MCF 10A (cell line): ENCODE measurements at regions of chr17 and their contacts with region 1.

Region 1: DNA sequence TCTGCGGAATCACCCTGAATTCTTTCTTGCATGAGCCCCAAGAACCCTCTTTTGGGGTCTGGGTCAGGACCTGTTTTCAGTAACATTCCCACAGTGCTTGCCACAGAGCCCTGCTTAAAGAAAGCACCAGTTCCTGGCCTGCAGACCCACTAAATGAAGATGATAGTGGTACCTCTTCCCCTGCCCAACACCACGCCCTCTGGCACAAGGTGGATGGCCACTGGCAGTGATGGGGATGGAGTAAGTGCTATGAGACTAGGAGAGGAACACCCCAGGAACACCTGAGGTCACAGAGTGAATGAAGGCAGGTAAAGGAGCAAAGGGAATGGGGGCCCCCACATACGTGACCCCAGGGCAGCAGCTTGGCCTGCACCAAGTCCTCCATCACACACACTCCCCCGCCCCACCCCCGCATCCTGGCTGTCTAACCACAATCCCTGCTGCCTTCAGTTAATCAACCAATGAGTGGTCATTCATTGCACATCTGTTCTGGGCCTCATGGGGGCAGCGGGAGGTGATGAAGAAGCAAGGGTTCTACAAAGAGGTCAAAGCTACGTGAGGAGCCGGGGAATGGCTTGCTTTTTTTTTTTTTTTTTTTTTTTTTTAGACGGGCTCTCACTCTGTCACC is 3.9 kb upstream of the PPY start:
- DNase-seq: peak; percentile 11
- H3K4me3 Mint-ChIP-seq: no peak overlapping the region
- H3K27ac Mint-ChIP-seq: no peak overlapping the region
- H3K4me1 Mint-ChIP-seq: no peaks in the 10 kb centered on the region
- H3K27me3 Mint-ChIP-seq: peaks cover 12% of the 10 kb centered on the region
- CTCF ChIP-seq: no peak

Region 2: DNA sequence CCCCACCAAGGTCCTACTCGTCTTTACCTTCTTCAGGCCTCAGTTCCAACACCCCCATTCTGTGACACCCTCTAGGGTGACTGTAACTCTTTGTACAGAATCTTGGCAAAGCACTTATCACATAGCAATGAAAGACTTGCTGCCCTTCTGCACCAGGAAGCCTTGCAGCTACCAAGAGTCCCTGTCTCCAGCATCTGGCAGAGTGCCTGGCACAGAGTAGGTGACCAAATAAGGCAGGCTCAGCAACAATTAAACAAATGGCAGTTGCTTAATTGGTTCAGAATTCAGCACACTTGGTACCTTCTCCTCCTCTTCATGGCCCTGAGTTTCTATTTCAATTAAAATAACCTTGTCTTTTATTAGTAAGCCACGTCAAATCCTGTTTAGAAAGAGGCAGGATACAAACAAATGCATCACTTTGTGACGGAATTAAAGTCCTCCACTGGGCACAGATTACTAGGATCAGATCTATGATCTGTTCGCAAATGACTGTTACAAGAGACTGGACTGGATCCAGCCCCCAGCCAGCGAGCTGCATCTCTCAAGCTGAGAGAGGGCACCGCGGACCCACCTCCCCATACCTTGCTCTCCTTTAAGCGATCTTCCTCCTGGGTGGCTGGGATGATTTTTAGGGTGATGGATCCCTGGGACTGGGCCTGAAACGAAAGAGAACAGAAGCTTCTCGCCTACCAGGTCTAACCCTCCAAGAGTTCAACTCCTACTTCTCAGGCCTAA is 122.7 kb before region 1 on chr17:
- CTCF ChIA-PET with region 1: no interaction called
- POLR2A ChIA-PET with region 1: no interaction called
- intact Hi-C with region 1: no loop called
- DNase-seq: no peak
- H3K4me3 Mint-ChIP-seq: no peak overlapping the region
- H3K27ac Mint-ChIP-seq: no peak overlapping the region
- H3K4me1 Mint-ChIP-seq: no peaks in the 10 kb centered on the region
- H3K27me3 Mint-ChIP-seq: no peaks in the 10 kb centered on the region
- CTCF ChIP-seq: no peak

Region 3: DNA sequence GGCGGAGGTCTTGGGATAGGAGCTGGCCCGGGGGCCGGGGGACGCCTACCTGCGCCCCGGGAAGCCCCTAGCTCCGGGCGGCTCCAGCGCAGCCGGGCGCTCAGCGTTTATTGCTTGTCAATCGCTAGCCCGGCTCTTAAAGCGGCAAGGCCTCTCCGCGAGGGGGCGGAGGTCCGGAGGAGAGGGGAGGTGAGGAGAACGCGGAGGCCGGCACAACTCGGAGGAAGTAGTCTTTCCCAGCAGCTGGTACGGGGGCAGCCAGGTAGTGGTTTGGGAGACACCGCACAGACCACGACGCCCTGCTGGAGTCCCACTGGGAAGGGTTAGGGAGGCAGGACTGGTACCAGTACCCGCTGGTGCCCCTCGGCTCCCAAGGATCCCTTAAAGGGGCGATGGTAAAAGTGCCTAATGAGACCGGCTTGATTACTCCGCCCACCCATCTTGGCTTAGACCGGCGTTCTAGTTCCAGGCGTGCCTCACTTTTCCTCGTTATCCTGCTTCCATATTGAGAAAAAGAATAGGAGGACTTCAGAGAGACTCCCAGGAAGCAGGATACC is 38.7 kb before region 1 on chr17 and contains the start of gene MPP2:
- CTCF ChIA-PET with region 1: interaction called, 15 read pairs
- POLR2A ChIA-PET with region 1: no interaction called
- intact Hi-C with region 1: no loop called
- DNase-seq: peak; percentile 20
- H3K4me3 Mint-ChIP-seq: no peak within 1 kb of the TSS
- H3K27ac Mint-ChIP-seq: no peak within 1 kb of the TSS
- H3K4me1 Mint-ChIP-seq: no peaks in the 10 kb centered on the region
- H3K27me3 Mint-ChIP-seq: peaks cover 27% of the 10 kb centered on the region
- CTCF ChIP-seq: no peak
- total RNA-seq, gene MPP2: not detected in 2 replicates

Region 4: GRCh38 chr17:43924558-43924957 is 21.6 kb before region 1 on chr17:
- CTCF ChIA-PET with region 1: interaction called, 11 read pairs
- POLR2A ChIA-PET with region 1: no interaction called
- intact Hi-C with region 1: no loop called
- DNase-seq: no peak
- H3K4me3 Mint-ChIP-seq: no peak overlapping the region
- H3K27ac Mint-ChIP-seq: no peak overlapping the region
- H3K4me1 Mint-ChIP-seq: no peaks in the 10 kb centered on the region
- H3K27me3 Mint-ChIP-seq: peaks cover 69% of the 10 kb centered on the region
- CTCF ChIP-seq: no peak

Region 5: GRCh38 chr17:43958953-43959352 is 12.8 kb after region 1 on chr17:
- CTCF ChIA-PET with region 1: interaction called, 24 read pairs
- POLR2A ChIA-PET with region 1: interaction called, 4 read pairs
- intact Hi-C with region 1: no loop called
- DNase-seq: peak; percentile 62
- H3K4me3 Mint-ChIP-seq: no peak overlapping the region
- H3K27ac Mint-ChIP-seq: no peak overlapping the region
- H3K4me1 Mint-ChIP-seq: peaks cover 5% of the 10 kb centered on the region
- H3K27me3 Mint-ChIP-seq: peaks cover 26% of the 10 kb centered on the region
- CTCF ChIP-seq: no peak

Region 6: GRCh38 chr17:43994272-43995149 is 48.3 kb after region 1 on chr17:
- CTCF ChIA-PET with region 1: interaction called, 82 read pairs
- POLR2A ChIA-PET with region 1: interaction called, 4 read pairs
- intact Hi-C with region 1: loop called (anchors 1 kb)
- DNase-seq: peak; percentile 69
- H3K4me3 Mint-ChIP-seq: peak overlapping the region; percentile 64
- H3K27ac Mint-ChIP-seq: no peak overlapping the region
- H3K4me1 Mint-ChIP-seq: peaks cover 8% of the 10 kb centered on the region
- H3K27me3 Mint-ChIP-seq: no peaks in the 10 kb centered on the region
- CTCF ChIP-seq: peak; percentile 95